PC-9 (cell line): ENCODE measurements at regions of chr5 and their contacts with region 1.

Region 1: GRCh38 chr5:136957428-136957827 is 541.7 kb downstream of the SPOCK1 start:
- DNase-seq: peak; percentile 40 to 86
- H3K4me3 ChIP-seq: no peak overlapping the region
- H3K27ac ChIP-seq: peak overlapping the region; percentile 42
- H3K4me1 ChIP-seq: peaks cover 37% of the 10 kb centered on the region
- H3K27me3 ChIP-seq: no peaks in the 10 kb centered on the region
- CTCF ChIP-seq: no peak

Region 2: GRCh38 chr5:136906582-136906981 is 50.8 kb before region 1 on chr5:
- CTCF ChIA-PET with region 1: no interaction called
- POLR2A ChIA-PET with region 1: no interaction called
- intact Hi-C with region 1: loop called (anchors 5 kb)
- DNase-seq: peak; percentile 43 to 74
- H3K4me3 ChIP-seq: no peak overlapping the region
- H3K27ac ChIP-seq: peak overlapping the region; percentile 6; the same call in 1 of the 2 replicates
- H3K4me1 ChIP-seq: peaks cover 24% of the 10 kb centered on the region
- H3K27me3 ChIP-seq: no peaks in the 10 kb centered on the region
- CTCF ChIP-seq: no peak